Caco-2 (cell line): ENCODE measurements at regions of chr9 and their contacts with region 1.

Region 1: GRCh38 chr9:105425841-105426436 is 21.9 kb upstream of the FSD1L start:
- DNase-seq: no peak
- H3K4me3 ChIP-seq: no peak overlapping the region
- H3K4me3 Mint-ChIP-seq: no peak overlapping the region
- H3K27ac Mint-ChIP-seq: no peak overlapping the region
- H3K4me1 ChIP-seq: 0 out of 2 replicates have a peak, but pooled peaks cover 2% of the 10 kb centered on the region
- H3K4me1 Mint-ChIP-seq: no peaks in the 10 kb centered on the region
- H3K27me3 ChIP-seq: no peaks in the 10 kb centered on the region; the same call in 1 of the 2 replicates
- H3K27me3 Mint-ChIP-seq: no peaks in the 10 kb centered on the region
- CTCF ChIP-seq: peak; percentile 37 to 53

Region 2: DNA sequence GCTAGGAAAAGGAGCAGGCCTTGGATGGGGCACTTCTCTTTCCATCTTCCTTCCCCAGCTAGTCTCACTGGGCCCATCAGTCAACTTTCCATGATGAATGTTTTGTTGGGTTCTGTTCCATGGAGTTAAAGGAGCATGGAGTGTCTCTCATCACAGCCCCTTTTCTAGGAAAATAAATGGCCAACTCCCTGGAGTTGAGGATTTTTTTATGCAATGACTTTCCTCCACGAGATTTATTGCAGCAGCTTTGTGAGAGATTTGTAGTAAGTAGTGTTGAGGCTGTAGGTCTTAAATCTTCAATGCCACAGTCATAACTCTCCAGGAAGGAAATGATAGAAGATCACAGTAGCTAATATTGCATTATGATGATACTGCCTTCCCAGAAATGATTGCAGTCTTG is 227.1 kb before region 1 on chr9:
- CTCF ChIA-PET with region 1: no interaction called
- POLR2A ChIA-PET with region 1: no interaction called
- intact Hi-C with region 1: no loop called
- DNase-seq: no peak
- H3K4me3 ChIP-seq: no peak overlapping the region
- H3K4me3 Mint-ChIP-seq: no peak overlapping the region
- H3K27ac Mint-ChIP-seq: no peak overlapping the region
- H3K4me1 ChIP-seq: no peaks in the 10 kb centered on the region
- H3K4me1 Mint-ChIP-seq: no peaks in the 10 kb centered on the region
- H3K27me3 ChIP-seq: no peaks in the 10 kb centered on the region
- H3K27me3 Mint-ChIP-seq: no peaks in the 10 kb centered on the region
- CTCF ChIP-seq: no peak

Region 3: DNA sequence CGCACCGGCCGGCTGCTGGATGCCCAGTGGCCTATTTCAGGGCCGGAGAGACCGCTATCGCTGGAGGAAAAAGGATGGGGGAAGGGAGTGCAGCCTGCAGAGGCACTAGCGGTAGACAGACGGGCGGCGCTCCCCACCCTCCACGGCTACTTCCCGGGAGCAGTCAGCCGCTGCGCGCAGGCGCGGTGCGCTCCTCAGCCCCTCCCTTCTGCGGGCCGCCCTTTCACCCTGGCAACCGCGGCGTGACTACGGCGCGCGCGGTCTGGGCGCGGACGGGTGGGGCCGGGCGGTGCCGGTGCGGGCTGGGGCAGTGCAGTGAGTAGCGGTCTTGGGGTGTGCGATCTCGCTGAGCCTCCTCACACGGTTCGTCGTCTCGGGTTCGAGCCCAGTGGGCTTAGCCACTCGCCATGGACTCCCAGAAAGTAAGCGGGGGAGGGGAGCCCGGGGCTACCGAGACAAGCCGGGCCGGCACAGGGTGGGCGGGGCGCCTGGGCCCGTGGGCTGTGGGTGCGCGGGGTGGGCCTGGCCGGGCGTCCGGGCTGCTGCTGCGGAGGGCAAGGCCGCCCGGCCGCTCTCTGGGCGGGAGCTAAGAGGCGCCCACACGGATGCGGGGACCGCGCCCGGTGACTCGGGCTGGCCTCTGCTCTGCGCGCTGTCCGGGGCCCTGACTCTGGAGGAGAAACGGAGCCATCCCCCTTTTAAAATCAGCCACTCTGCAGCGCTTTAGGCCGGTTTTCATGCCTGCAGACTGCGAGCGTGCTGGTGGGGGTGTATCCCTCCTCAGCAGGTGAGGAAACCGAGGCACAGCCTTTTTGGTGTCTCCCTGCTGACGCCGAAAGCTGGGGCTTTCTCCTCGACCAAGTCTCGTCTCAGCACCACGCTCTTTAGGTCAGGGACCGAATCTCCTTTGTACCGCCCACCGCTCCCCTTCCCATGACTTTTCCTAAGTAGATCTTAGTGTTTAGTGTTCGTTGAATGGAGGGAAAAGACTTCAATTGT is 22.2 kb after region 1 on chr9 and contains the start of gene FSD1L:
- CTCF ChIA-PET with region 1: no interaction called
- POLR2A ChIA-PET with region 1: no interaction called
- intact Hi-C with region 1: no loop called
- DNase-seq: peak; percentile 93 to 94
- H3K4me3 ChIP-seq: peak within 1 kb of the TSS; percentile 68
- H3K4me3 Mint-ChIP-seq: peak within 1 kb of the TSS; percentile 92
- H3K27ac Mint-ChIP-seq: peak within 1 kb of the TSS; percentile 85
- H3K4me1 ChIP-seq: peaks cover 12% of the 10 kb centered on the region
- H3K4me1 Mint-ChIP-seq: peaks cover 5% of the 10 kb centered on the region
- H3K27me3 ChIP-seq: no peaks in the 10 kb centered on the region
- H3K27me3 Mint-ChIP-seq: no peaks in the 10 kb centered on the region
- CTCF ChIP-seq: peak in 1 of 2 experiments; percentile 13
- total RNA-seq, gene FSD1L: 4.7 and 5.7 TPM in 2 replicates

Region 4: DNA sequence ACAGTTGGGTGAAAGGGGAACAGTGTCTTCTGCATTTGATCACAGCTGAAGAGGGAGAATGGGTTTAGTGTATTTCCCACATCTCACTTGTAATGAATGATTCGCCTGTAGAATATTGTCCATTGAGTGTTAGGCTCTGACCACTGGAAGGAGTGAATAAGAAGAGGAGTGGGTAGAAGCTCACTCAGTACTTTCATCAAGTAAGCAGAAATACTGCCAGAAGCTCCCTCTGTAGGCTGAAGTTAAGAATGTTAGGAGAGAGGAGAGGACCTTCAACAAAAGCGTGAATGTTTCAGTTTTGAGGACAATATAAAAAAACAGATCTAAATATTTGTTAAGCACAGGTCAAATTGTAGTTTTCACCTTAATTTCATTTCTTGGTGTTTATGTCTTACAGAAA is 49.4 kb after region 1 on chr9:
- CTCF ChIA-PET with region 1: interaction called, 5 read pairs
- POLR2A ChIA-PET with region 1: no interaction called
- intact Hi-C with region 1: loop called (anchors 1 kb)
- DNase-seq: peak in 1 of 2 experiments; percentile 23
- H3K4me3 ChIP-seq: no peak overlapping the region
- H3K4me3 Mint-ChIP-seq: no peak overlapping the region
- H3K27ac Mint-ChIP-seq: no peak overlapping the region
- H3K4me1 ChIP-seq: no peaks in the 10 kb centered on the region
- H3K4me1 Mint-ChIP-seq: no peaks in the 10 kb centered on the region
- H3K27me3 ChIP-seq: no peaks in the 10 kb centered on the region
- H3K27me3 Mint-ChIP-seq: no peaks in the 10 kb centered on the region
- CTCF ChIP-seq: peak; percentile 34 to 67

Region 5: GRCh38 chr9:105531530-105531929 is 105.6 kb after region 1 on chr9:
- CTCF ChIA-PET with region 1: no interaction called
- POLR2A ChIA-PET with region 1: no interaction called
- intact Hi-C with region 1: loop called (anchors 5 kb)
- DNase-seq: no peak
- H3K4me3 ChIP-seq: no peak overlapping the region
- H3K4me3 Mint-ChIP-seq: no peak overlapping the region
- H3K27ac Mint-ChIP-seq: no peak overlapping the region
- H3K4me1 ChIP-seq: no peaks in the 10 kb centered on the region
- H3K4me1 Mint-ChIP-seq: no peaks in the 10 kb centered on the region
- H3K27me3 ChIP-seq: no peaks in the 10 kb centered on the region
- H3K27me3 Mint-ChIP-seq: no peaks in the 10 kb centered on the region
- CTCF ChIP-seq: no peak

Region 6: DNA sequence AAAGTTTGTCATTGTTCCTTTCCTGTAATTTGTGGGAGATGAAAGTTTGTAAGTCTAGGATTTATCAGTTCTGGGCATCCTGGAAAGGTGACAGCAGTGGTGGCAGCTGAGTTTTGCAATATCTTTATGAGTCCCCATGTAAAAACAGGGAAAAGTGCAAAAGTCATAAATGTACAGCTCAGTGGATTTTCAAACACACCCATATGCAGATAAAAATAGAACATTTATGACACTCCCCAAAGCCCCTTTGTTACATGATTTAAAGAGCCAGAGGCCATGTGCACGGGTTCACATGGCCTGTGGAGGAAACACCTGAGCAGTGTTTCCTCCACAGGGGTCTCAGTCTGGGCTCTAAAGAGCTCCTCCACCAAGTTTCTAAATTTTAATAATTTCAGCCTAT is 274.7 kb after region 1 on chr9:
- CTCF ChIA-PET with region 1: no interaction called
- POLR2A ChIA-PET with region 1: no interaction called
- intact Hi-C with region 1: no loop called
- DNase-seq: peak in 1 of 2 experiments; percentile 13
- H3K4me3 ChIP-seq: no peak overlapping the region
- H3K4me3 Mint-ChIP-seq: no peak overlapping the region
- H3K27ac Mint-ChIP-seq: peak overlapping the region; percentile 42
- H3K4me1 ChIP-seq: peaks cover 31% of the 10 kb centered on the region; the same call in 1 of the 2 replicates
- H3K4me1 Mint-ChIP-seq: no peaks in the 10 kb centered on the region
- H3K27me3 ChIP-seq: no peaks in the 10 kb centered on the region
- H3K27me3 Mint-ChIP-seq: no peaks in the 10 kb centered on the region
- CTCF ChIP-seq: no peak

Region 7: GRCh38 chr9:105712773-105713172 is 286.8 kb after region 1 on chr9:
- CTCF ChIA-PET with region 1: no interaction called
- POLR2A ChIA-PET with region 1: no interaction called
- intact Hi-C with region 1: loop called (anchors 5 kb)
- DNase-seq: no peak
- H3K4me3 ChIP-seq: no peak overlapping the region
- H3K4me3 Mint-ChIP-seq: no peak overlapping the region
- H3K27ac Mint-ChIP-seq: no peak overlapping the region
- H3K4me1 ChIP-seq: no peaks in the 10 kb centered on the region
- H3K4me1 Mint-ChIP-seq: no peaks in the 10 kb centered on the region
- H3K27me3 ChIP-seq: no peaks in the 10 kb centered on the region
- H3K27me3 Mint-ChIP-seq: no peaks in the 10 kb centered on the region
- CTCF ChIP-seq: no peak